ENCODE measurements at regions of chr3 and their contacts with region 1.

Region 1: DNA sequence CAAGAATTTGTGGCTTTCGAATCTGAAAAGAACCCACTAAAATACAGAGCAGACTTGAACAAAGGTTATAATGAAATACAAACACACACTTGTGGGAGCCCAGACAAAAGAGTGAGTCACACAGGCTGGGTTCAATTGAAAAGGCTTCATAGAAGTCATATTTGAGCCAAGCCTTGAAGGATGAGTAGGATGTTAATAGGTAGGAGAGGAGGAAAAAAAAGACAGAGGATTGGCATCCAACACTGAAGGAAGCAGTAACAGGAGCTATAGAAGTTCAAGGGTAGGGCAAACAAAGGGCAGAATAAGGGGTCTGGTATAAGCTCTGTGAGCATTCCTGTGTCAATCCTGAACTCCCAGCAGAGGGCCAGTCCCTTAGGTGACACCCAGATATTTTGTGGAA is 325.4 kb downstream of the FOXP1 start:
- DNase-seq: peak; percentile 82
- H3K4me3 ChIP-seq: no peak overlapping the region
- H3K27ac ChIP-seq: peak overlapping the region; percentile 23
- H3K4me1 ChIP-seq: peaks cover 20% of the 10 kb centered on the region
- H3K27me3 ChIP-seq: no peaks in the 10 kb centered on the region
- CTCF ChIP-seq: no peak
- POLR2A ChIP-seq: no peak

Region 2: DNA sequence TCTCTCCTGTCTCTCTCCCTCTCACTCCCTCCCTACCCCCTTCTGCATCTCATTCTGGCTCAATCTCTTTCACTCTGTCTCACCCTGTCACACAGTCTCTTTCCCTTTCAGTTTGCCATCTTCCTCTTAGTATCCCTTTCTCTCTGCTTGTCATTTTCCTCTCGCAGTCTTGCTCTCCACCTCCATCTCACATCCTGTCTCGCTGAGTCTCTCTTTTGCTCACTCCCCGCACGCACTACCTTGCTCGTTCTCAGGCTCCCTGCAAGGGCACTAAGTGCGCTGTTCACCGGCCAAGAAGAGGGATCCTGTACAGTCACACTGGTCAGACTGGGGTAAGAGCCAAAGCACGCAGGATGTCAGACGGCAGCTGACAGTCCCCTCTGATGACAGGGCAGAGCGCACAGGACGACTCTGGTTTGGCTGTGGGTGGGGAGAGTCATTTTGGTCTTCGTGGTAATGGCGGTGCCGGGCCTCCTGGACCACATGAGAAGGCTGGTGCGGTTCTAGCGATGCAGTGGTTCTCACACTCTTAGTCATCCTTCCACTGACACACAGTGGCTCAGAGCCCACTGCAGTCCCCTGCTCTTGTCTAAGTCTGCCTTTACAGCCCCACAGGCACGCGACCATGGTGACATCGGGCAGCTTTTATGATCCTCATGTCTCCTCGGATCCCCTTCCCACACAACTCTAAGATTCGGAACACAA is 31.4 kb before region 1 on chr3:
- CTCF ChIA-PET with region 1: no interaction called
- POLR2A ChIA-PET with region 1: no interaction called
- dilution Hi-C with region 1: no loop called
- intact Hi-C with region 1: no loop called
- DNase-seq: no peak
- H3K4me3 ChIP-seq: no peak overlapping the region
- H3K27ac ChIP-seq: peak overlapping the region; percentile 66
- H3K4me1 ChIP-seq: peaks cover 24% of the 10 kb centered on the region
- H3K27me3 ChIP-seq: no peaks in the 10 kb centered on the region
- CTCF ChIP-seq: no peak
- POLR2A ChIP-seq: no peak

Region 3: GRCh38 chr3:71247221-71247976 is 10.7 kb before region 1 on chr3:
- CTCF ChIA-PET with region 1: interaction called, 10 read pairs
- POLR2A ChIA-PET with region 1: no interaction called
- dilution Hi-C with region 1: no loop called
- intact Hi-C with region 1: no loop called
- DNase-seq: no peak
- H3K4me3 ChIP-seq: no peak overlapping the region
- H3K27ac ChIP-seq: no peak overlapping the region
- H3K4me1 ChIP-seq: peaks cover 34% of the 10 kb centered on the region
- H3K27me3 ChIP-seq: no peaks in the 10 kb centered on the region
- CTCF ChIP-seq: no peak
- POLR2A ChIP-seq: no peak

Measured in endothelial cell of umbilical vein (primary cell).